Heart left ventricle (tissue), 16 donors: ENCODE measurements at regions of chr4 and their contacts with region 1.

Region 1: DNA sequence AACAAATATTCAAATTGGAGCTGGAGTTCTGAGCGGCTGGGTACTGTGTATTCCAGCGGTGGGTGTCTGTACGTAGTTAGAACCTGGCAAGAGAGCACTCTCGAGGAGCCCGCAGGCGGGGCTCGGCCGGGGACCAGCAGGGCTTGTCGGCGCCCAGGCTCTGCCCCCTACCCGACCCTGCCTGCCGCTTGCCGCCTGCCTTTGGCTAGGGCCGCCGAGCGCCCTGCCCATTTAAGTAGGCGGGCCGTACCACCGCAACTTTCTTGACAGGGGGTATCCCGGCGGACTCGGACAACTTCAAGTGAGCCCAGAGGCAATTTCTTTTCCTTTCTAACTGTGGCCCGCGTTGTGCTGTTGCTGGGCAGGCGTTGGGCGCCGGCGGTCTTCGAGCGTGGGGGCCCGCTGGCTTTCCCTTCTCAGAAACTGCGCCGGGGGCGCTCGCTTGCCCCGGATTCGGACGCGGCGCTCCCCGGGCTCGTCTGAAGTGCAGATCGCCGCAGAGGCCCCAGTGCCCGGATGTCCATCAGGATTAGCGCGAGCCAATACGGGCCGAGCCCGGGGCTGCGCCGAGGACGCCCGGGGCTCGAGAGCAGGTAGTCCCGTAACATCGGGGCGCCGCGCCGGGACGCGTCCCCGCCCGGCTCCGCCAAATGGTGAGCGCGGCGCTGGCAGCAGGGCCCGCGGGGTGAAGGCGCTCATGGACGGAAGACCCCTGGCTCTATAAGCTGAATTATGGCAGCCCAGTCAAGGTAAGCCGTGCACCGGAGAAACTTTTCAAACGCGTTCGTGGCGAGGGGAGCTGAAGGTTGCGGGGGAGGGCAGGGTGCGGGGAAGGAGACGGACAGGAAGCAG is 72.1 kb downstream of the AFF1 start:
- DNase-seq: peak; percentile 94 to 97 (median 96)
- ATAC-seq: peak; percentile 87 to 96 (median 94)
- H3K4me3 ChIP-seq: peak overlapping the region; percentile 69 to 91 (median 80)
- H3K27ac ChIP-seq: peak overlapping the region; percentile 91 to 100 (median 98)
- H3K4me1 ChIP-seq: peaks cover 7 to 56% (median 48%) of the 10 kb centered on the region in 12 donors
- H3K27me3 ChIP-seq: no peaks in the 10 kb centered on the region
- CTCF ChIP-seq: peak in 6 of 12 donors; percentile 4 to 54 (median 36)
- POLR2A ChIP-seq: peak; percentile 74 to 94

Region 2: GRCh38 chr4:86934771-86935565 is 71.9 kb before region 1 on chr4 and contains the start of gene AFF1:
- intact Hi-C with region 1: loop called (anchors 1 to 5 kb)
- DNase-seq: peak; percentile 94 to 97 (median 96)
- ATAC-seq: peak; percentile 94 to 97 (median 94)
- H3K4me3 ChIP-seq: peak within 1 kb of the TSS; percentile 58 to 98 (median 94)
- H3K27ac ChIP-seq: peak within 1 kb of the TSS; percentile 87 to 100 (median 98)
- H3K4me1 ChIP-seq: peaks cover 6 to 49% (median 36%) of the 10 kb centered on the region in 12 donors
- H3K27me3 ChIP-seq: no peaks in the 10 kb centered on the region
- CTCF ChIP-seq: peak; percentile 29 to 83 (median 52)
- POLR2A ChIP-seq: peak; percentile 73 to 95
- total RNA-seq, gene AFF1: 55.8 to 96.5 (median 73.3) TPM

Region 3: GRCh38 chr4:87038837-87039615 is 32.1 kb after region 1 on chr4:
- intact Hi-C with region 1: loop called in 1 of 10 experiments (anchors 5 kb)
- DNase-seq: peak in 4 of 5 donors; percentile 64 to 85 (median 76)
- ATAC-seq: peak; percentile 74 to 90 (median 80)
- H3K4me3 ChIP-seq: no peak overlapping the region
- H3K27ac ChIP-seq: peak overlapping the region; percentile 33 to 89 (median 78)
- H3K4me1 ChIP-seq: peaks cover 35 to 99% (median 89%) of the 10 kb centered on the region in 12 donors
- H3K27me3 ChIP-seq: no peaks in the 10 kb centered on the region
- CTCF ChIP-seq: no peak
- POLR2A ChIP-seq: no peak

Region 4: GRCh38 chr4:87058356-87059073 is 51.6 kb after region 1 on chr4:
- intact Hi-C with region 1: loop called in 4 of 10 experiments (anchors 2 to 5 kb)
- DNase-seq: peak in 1 of 5 donors; percentile 43
- ATAC-seq: peak in 3 of 4 donors; percentile 42 to 66 (median 50)
- H3K4me3 ChIP-seq: no peak overlapping the region
- H3K27ac ChIP-seq: peak overlapping the region; percentile 31 to 80 (median 66)
- H3K4me1 ChIP-seq: peaks cover 18 to 84% (median 69%) of the 10 kb centered on the region in 12 donors
- H3K27me3 ChIP-seq: no peaks in the 10 kb centered on the region
- CTCF ChIP-seq: peak in 7 of 12 donors; percentile 20 to 53 (median 31)
- POLR2A ChIP-seq: no peak

Region 5: DNA sequence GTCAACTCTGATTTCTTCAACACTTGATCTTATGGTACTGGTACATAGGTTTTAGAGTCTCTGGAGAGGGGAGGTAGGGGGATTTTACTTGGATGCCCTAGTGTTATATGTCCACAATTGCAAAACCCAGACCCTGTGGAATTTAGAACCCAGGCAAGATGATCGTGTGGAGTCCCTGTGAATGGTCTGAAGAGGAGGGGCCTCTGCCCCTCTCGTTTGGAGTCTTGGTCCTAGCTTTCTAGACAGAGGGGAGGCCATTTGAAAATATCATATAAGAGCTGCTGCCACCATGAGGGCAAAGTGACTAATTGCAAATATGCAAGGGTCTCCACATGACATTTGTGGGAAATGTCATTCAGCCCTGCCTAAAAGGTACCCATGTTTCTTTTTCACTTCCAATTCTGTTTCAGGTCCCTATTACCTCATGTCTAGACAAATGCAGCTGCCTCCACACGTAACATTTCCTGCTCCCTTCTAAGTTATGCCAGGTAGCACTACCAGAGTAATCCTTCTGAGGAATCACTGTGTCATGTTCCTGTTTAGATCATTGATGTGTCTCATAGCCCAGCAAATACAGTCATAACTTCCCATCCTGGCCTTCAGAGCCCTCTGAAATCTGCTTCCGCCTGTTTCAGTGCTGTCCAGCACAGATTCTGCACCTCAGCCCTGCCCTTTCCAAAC is 86.7 kb after region 1 on chr4:
- intact Hi-C with region 1: loop called in 9 of 10 experiments (anchors 2 to 5 kb)
- DNase-seq: peak in 1 of 5 donors; percentile 37
- ATAC-seq: peak; percentile 65 to 84 (median 78)
- H3K4me3 ChIP-seq: no peak overlapping the region
- H3K27ac ChIP-seq: peak overlapping the region in 6 of 12 donors; percentile 2 to 43 (median 15)
- H3K4me1 ChIP-seq: peaks cover 0 to 52% (median 27%) of the 10 kb centered on the region in 12 donors
- H3K27me3 ChIP-seq: no peaks in the 10 kb centered on the region
- CTCF ChIP-seq: peak; percentile 48 to 84 (median 71)
- POLR2A ChIP-seq: no peak